Lower leg skin (tissue), 4 donors: ENCODE measurements at regions of chr6 and their contacts with region 1.

Region 1: DNA sequence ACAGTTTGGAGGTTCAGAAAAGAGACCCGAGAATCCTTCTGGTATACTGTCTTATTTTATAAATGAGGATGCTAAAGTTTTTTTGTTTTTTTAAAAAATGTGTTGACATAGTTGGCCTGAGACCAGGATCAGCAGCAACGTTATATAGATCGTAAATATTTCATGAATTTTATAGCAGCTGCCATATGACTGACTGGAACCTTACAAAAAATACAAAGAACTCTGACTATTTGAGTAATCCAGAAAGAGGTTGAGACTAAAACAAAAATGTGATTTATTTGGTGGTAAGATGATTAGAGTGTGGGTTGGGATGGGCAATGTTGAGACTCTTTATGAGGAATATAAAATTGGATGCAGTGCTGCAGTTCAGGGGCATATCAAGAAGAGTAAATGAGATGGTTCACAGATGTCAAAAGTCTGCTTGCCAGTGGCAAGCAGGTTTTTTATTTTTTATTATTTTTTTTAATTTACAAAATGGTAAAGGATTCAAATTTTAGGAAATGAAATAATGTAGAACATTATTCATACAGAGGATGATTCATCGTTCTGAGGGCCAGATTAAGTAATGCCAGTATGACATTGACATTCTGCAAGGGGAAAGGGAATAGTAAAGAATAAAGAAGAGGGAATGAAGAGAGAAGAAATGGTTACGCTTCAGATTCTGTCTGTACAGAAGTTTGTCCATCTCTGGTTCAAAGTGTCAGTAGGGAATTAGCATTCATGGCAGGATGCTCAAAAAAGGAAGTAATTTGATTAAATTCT is 58.5 kb downstream of the SCAF8 start:
- DNase-seq: no peak
- H3K4me3 ChIP-seq: no peak overlapping the region
- CTCF ChIP-seq: no peak
- POLR2A ChIP-seq: no peak

Region 2: GRCh38 chr6:154673919-154674318 is 117.8 kb before region 1 on chr6:
- intact Hi-C with region 1: loop called (anchors 5 kb)
- DNase-seq: no peak
- H3K4me3 ChIP-seq: no peak overlapping the region
- CTCF ChIP-seq: no peak
- POLR2A ChIP-seq: no peak